Body of pancreas (tissue), 4 donors: ENCODE measurements at regions of chr14 and their contacts with region 1.

Region 1: GRCh38 chr14:50532502-50533240 is at the start of gene MAP4K5:
- DNase-seq: peak; percentile 91 to 94 (median 94)
- ATAC-seq: peak; percentile 99
- H3K4me3 ChIP-seq: peak within 1 kb of the TSS; percentile 93 to 96
- H3K27ac ChIP-seq: peak within 1 kb of the TSS; percentile 88 to 96 (median 92)
- H3K4me1 ChIP-seq: peaks cover 34% of the 10 kb centered on the region
- H3K27me3 ChIP-seq: no peaks in the 10 kb centered on the region
- CTCF ChIP-seq: peak; percentile 83 to 99 (median 98)
- POLR2A ChIP-seq: peak; percentile 25 to 84 (median 53)
- total RNA-seq, gene MAP4K5: 111 to 159 TPM

Region 2: DNA sequence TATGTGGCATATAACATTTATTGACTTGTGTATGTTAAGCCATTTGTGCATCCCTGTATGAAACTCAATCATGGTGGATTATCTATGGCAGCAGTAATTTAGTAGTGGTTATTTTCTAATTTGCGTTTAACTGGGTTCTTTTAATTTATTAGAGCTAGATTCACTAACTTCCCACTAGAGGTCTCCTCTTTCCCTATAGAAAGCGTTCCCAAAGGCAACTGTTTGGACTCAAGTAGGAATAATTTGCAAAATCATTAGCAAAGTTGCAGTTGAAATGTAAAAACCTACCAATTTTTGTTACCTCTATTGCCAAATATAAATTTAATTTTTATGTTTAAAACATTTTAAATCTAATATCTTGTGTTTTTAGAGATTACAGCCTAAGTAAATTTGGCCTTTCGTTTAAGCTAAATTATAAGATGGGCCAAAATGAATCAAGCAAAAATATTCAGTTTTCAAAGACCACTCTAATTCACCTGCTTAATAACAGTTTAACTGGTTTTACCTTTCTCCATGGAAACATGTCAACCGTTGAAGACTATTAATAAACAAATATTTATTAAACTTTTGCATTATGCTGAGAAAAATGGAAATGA is 214.5 kb before region 1 on chr14:
- intact Hi-C with region 1: loop called (anchors 5 kb)
- DNase-seq: no peak
- ATAC-seq: no peak
- H3K4me3 ChIP-seq: no peak overlapping the region
- H3K27ac ChIP-seq: no peak overlapping the region
- H3K4me1 ChIP-seq: peaks cover 16% of the 10 kb centered on the region
- H3K27me3 ChIP-seq: no peaks in the 10 kb centered on the region
- CTCF ChIP-seq: peak; percentile 39 to 76 (median 66)
- POLR2A ChIP-seq: no peak

Region 3: DNA sequence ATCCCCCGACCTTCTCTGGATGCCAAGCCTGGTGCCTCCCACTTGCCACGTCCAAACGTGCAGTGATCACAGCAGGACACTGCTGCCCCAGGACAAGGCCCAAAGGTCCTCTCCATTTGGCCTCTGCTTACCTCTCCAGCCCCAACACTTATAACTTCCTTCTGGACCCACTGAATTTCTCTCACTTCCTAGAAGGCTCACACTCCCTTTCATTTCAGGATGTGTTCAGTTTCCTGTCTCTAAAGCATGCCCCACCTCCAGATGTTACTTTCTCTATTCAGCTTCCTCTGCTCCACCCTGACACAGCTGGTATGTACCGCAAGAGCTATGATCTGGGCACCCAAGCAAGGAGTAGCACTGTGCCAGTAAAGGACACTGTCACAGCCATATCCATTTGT is 169.0 kb before region 1 on chr14:
- intact Hi-C with region 1: no loop called
- DNase-seq: peak in 1 of 4 donors; percentile 36
- ATAC-seq: peak; percentile 26
- H3K4me3 ChIP-seq: no peak overlapping the region
- H3K27ac ChIP-seq: no peak overlapping the region
- H3K4me1 ChIP-seq: peaks cover 36% of the 10 kb centered on the region
- H3K27me3 ChIP-seq: no peaks in the 10 kb centered on the region
- CTCF ChIP-seq: no peak
- POLR2A ChIP-seq: no peak

Region 4: DNA sequence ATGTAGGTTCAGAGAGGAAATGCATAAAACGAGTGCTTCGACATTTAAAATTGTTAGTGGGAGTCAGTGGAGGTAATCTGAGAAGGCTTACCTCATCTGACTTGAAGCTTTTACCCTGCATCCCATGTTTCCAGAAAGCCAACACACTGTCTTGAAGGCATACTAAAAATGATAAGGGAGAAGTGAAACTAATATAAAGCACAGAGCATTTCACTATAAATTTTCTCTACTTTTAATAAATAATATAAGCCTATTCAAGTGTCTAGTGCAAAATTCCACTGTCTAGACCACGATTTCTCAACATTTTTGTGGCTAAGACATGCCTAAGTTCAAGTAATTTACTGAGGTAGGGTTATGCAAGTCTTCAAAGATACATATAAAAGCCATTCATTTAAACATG is 106.9 kb before region 1 on chr14:
- intact Hi-C with region 1: no loop called
- DNase-seq: no peak
- ATAC-seq: no peak
- H3K4me3 ChIP-seq: no peak overlapping the region
- H3K27ac ChIP-seq: no peak overlapping the region
- H3K4me1 ChIP-seq: no peaks in the 10 kb centered on the region
- H3K27me3 ChIP-seq: no peaks in the 10 kb centered on the region
- CTCF ChIP-seq: no peak
- POLR2A ChIP-seq: no peak